ENCODE measurements at regions of chr5 and their contacts with region 1.

Region 1: DNA sequence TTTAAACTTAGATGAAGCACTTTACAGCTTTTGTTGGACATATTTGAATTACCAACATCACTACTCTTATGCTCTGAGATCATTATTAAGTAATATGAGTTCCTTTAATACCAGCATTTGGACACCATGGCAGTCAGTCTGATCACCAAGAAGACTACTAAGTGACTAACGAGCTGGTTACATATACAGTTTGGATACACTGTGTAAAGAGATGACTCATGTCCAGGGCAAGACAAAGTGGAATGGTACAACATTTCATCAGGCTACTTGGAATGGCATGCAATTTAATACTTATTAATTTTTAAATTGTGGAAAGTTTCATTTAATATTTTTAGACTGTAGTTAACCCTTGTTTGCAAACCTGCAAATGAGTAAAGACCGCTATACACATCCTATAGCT is 237.4 kb upstream of the PRDM9 start:
- DNase-seq: no peak
- ATAC-seq: no peak
- H3K4me3 ChIP-seq: no peak overlapping the region
- H3K4me3 Mint-ChIP-seq: no peak overlapping the region
- H3K27ac ChIP-seq: no peak overlapping the region
- H3K27ac Mint-ChIP-seq: no peak overlapping the region
- H3K4me1 ChIP-seq: no peaks in the 10 kb centered on the region
- H3K4me1 Mint-ChIP-seq: no peaks in the 10 kb centered on the region
- H3K27me3 ChIP-seq: no peaks in the 10 kb centered on the region
- H3K27me3 Mint-ChIP-seq: no peaks in the 10 kb centered on the region
- CTCF ChIP-seq: no peak

Region 2: DNA sequence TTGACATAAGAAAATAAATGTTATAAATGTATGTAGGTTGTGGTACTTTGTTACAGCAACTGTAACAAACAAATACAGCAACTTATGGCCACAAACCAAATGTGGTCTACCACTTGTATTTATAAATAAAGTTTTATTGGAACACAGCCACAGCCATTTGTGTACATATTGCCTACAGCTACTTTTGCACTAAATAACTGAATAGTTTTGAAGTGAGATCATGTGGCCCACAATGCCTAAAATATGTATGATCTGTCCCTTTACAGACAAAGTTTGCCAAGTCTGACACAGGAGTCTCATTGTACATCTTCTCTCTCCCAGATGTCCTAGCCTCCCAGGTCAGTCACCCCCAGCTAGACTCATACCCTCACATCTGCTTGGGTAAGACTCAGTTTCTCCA is 46.1 kb before region 1 on chr5:
- CTCF ChIA-PET with region 1: no interaction called
- POLR2A ChIA-PET with region 1: no interaction called
- intact Hi-C with region 1: loop called in 1 of 2 experiments (anchors 1 kb)
- DNase-seq: no peak
- ATAC-seq: no peak
- H3K4me3 ChIP-seq: no peak overlapping the region
- H3K4me3 Mint-ChIP-seq: no peak overlapping the region
- H3K27ac ChIP-seq: no peak overlapping the region
- H3K27ac Mint-ChIP-seq: no peak overlapping the region
- H3K4me1 ChIP-seq: no peaks in the 10 kb centered on the region
- H3K4me1 Mint-ChIP-seq: no peaks in the 10 kb centered on the region
- H3K27me3 ChIP-seq: no peaks in the 10 kb centered on the region
- H3K27me3 Mint-ChIP-seq: no peaks in the 10 kb centered on the region
- CTCF ChIP-seq: no peak

Region 3: DNA sequence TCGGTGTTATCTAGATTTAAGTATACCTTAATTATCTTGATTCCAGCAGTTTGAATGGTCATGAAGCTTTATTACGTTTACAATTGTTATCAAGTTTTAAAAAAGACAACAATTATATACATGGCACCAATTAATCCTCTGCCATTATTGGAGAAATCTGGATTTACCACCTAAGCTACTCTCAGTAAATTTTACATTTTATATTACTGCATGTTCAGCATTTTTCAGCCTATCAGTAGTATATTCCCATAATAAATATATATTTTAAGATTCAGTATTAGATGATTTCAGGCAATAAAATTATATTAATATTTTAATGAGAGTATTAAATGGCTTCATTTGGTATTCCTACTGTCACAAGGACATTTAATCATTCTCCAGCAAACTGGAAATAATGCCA is 27.1 kb before region 1 on chr5:
- CTCF ChIA-PET with region 1: no interaction called
- POLR2A ChIA-PET with region 1: no interaction called
- intact Hi-C with region 1: no loop called
- DNase-seq: no peak
- ATAC-seq: no peak
- H3K4me3 ChIP-seq: no peak overlapping the region
- H3K4me3 Mint-ChIP-seq: no peak overlapping the region
- H3K27ac ChIP-seq: no peak overlapping the region
- H3K27ac Mint-ChIP-seq: no peak overlapping the region
- H3K4me1 ChIP-seq: no peaks in the 10 kb centered on the region
- H3K4me1 Mint-ChIP-seq: no peaks in the 10 kb centered on the region
- H3K27me3 ChIP-seq: no peaks in the 10 kb centered on the region
- H3K27me3 Mint-ChIP-seq: no peaks in the 10 kb centered on the region
- CTCF ChIP-seq: no peak